AG04449 (cell line): ENCODE measurements at regions of chr4 and their contacts with region 1.

Region 1: DNA sequence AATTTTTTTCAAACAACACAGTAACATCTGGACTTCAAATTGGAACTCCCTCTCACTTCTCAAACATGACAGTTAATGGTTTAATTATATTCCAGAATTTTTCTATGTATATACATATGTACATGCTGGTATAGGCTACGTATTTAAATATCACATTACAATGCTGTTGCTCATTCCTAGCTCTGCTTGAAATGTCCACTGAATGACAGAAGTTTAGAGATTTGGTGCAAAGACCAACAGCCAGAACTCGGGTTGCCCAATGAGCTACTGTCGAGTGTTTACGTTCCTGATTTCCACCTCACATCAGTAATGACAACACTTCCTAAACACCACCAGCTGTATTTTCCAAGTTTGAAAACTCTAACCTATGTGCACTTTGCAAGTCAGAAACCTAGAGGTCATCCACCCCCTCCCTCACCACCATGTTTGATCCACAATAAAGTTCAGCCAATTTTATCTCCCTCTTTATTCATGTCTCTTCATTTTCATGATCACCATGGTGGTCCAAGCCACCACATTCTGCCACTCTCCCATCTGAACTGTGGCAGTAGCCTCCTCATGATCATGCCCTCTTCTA is 49.3 kb upstream of the RPL34 start:
- DNase-seq: no peak
- H3K4me3 ChIP-seq: no peak overlapping the region
- CTCF ChIP-seq: no peak

Region 2: GRCh38 chr4:108030332-108030731 is 540.7 kb before region 1 on chr4:
- CTCF ChIA-PET with region 1: interaction called, 97 read pairs
- POLR2A ChIA-PET with region 1: interaction called, 4 read pairs
- DNase-seq: peak; percentile 21
- H3K4me3 ChIP-seq: no peak overlapping the region
- CTCF ChIP-seq: peak; percentile 69

Region 3: GRCh38 chr4:108060164-108060563 is 510.9 kb before region 1 on chr4:
- CTCF ChIA-PET with region 1: interaction called, 49 read pairs
- POLR2A ChIA-PET with region 1: no interaction called
- DNase-seq: no peak
- H3K4me3 ChIP-seq: no peak overlapping the region
- CTCF ChIP-seq: peak; percentile 12

Region 4: DNA sequence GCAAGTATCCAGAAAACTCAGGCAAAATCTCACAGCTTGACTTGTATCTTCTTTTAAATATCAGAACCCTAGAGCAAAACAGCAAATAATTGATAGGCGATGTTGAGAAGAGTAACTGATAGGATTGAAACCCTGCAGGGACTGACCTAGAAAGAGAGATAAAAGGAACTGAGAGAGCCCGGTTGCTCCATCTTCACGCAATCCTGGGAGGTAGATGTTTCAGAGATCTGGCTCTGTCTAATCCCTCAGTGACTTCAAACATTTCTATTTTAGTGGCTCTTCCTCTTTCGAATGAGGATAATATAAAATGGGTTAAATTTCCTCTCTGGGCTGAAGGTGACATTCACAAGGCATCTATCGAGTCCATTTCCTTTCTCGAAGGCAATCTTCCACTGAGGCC is 10.0 kb after region 1 on chr4:
- CTCF ChIA-PET with region 1: interaction called, 45 read pairs
- POLR2A ChIA-PET with region 1: no interaction called
- DNase-seq: no peak
- H3K4me3 ChIP-seq: no peak overlapping the region
- CTCF ChIP-seq: no peak

Region 5: GRCh38 chr4:108714863-108715581 is 143.9 kb after region 1 on chr4:
- CTCF ChIA-PET with region 1: no interaction called
- POLR2A ChIA-PET with region 1: no interaction called
- DNase-seq: no peak
- H3K4me3 ChIP-seq: no peak overlapping the region
- CTCF ChIP-seq: no peak

Region 6: DNA sequence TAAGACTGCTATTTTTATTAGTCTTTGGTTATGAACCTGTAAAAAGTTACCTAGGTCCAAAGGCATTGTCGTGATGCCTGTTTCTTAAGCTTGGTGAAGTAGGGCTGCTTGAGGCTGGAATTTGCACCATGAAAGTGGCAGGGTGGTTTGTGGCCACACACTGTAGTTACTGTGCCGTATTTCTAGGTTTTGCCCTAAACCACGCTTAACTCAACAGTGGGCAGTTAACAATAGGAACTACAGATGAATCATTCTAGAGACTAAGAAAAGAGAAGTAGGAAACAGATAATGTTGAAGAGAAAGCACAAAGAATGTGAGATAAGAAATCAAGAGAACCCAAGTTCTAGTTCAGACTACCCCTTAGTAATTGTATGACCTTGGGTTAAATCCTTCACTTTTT is 180.2 kb after region 1 on chr4:
- CTCF ChIA-PET with region 1: no interaction called
- POLR2A ChIA-PET with region 1: no interaction called
- DNase-seq: no peak
- H3K4me3 ChIP-seq: no peak overlapping the region
- CTCF ChIP-seq: no peak

Region 7: GRCh38 chr4:108917255-108917654 is 346.2 kb after region 1 on chr4:
- CTCF ChIA-PET with region 1: no interaction called
- POLR2A ChIA-PET with region 1: no interaction called
- DNase-seq: no peak
- H3K4me3 ChIP-seq: no peak overlapping the region
- CTCF ChIP-seq: no peak